Naive thymus-derived CD4-positive, alpha-beta T cell (primary cell): ENCODE measurements at regions of chr10 and their contacts with region 1.

Region 1: GRCh38 chr10:70146489-70147258 is at the start of gene TYSND1:
- DNase-seq: peak; percentile 79 to 95 (median 92)
- ATAC-seq: peak; percentile 92
- H3K4me3 ChIP-seq: peak within 1 kb of the TSS; percentile 79
- H3K4me3 Mint-ChIP-seq: peak within 1 kb of the TSS; percentile 89 to 96 (median 93)
- H3K27ac ChIP-seq: peak within 1 kb of the TSS; percentile 80
- H3K27ac Mint-ChIP-seq: peak within 1 kb of the TSS; percentile 87 to 98 (median 95)
- H3K4me1 ChIP-seq: peaks cover 13 to 22% of the 10 kb centered on the region in 2 donors
- H3K4me1 Mint-ChIP-seq: peaks cover 15 to 45% (median 36%) of the 10 kb centered on the region in 7 donors
- H3K27me3 ChIP-seq: no peaks in the 10 kb centered on the region
- H3K27me3 Mint-ChIP-seq: no peaks in the 10 kb centered on the region
- total RNA-seq, gene TYSND1: 13.8 to 35.9 (median 19.5) TPM

Region 2: DNA sequence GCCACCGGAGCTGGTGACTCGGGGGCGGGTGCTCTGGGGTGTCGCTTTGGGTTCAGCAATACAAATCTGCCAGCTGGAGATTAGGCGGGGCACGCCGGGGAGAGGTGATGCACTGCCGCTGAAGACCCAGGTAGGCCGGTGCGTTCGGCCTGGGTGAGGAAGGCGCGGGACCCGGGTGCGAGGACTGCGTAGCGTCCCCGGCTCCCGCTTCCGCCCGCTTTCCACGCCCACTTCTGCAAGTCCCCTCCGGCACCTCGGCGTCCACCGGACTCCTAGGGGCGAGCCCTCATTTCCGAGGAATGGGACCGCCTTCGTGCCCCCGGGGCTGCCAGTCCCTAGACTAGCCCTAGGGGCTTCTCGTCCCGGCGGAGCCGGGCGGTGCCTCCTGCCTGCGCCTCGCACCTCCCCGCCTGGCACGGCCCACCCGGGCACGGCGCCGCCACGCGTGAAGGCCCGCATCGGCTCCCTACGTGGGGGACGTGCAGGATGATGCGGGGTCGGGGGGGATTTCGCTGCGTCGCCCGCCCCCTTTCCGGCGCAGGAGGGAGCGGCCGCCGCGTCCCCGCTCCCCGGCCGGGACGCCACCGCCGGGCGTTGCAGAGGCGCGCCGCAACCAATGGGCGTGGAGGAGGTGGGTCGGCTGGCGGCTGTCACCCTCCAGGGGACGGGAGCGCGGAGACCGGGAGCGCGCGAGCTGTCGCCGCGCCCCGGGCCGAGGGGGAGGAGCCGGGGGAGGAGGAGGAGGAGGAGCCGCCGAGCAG is 828.4 kb before region 1 on chr10:
- CTCF ChIA-PET with region 1: no interaction called
- POLR2A ChIA-PET with region 1: no interaction called
- intact Hi-C with region 1: loop called (anchors 5 kb)
- DNase-seq: peak; percentile 88 to 96 (median 91)
- ATAC-seq: peak; percentile 97
- H3K4me3 ChIP-seq: peak overlapping the region; percentile 85
- H3K4me3 Mint-ChIP-seq: peak overlapping the region; percentile 86 to 99 (median 96)
- H3K27ac ChIP-seq: peak overlapping the region; percentile 90
- H3K27ac Mint-ChIP-seq: peak overlapping the region; percentile 51 to 97 (median 86)
- H3K4me1 ChIP-seq: peaks cover 22 to 26% of the 10 kb centered on the region in 2 donors
- H3K4me1 Mint-ChIP-seq: peaks cover 7 to 49% (median 36%) of the 10 kb centered on the region in 7 donors
- H3K27me3 ChIP-seq: no peaks in the 10 kb centered on the region
- H3K27me3 Mint-ChIP-seq: no peaks in the 10 kb centered on the region

Region 3: DNA sequence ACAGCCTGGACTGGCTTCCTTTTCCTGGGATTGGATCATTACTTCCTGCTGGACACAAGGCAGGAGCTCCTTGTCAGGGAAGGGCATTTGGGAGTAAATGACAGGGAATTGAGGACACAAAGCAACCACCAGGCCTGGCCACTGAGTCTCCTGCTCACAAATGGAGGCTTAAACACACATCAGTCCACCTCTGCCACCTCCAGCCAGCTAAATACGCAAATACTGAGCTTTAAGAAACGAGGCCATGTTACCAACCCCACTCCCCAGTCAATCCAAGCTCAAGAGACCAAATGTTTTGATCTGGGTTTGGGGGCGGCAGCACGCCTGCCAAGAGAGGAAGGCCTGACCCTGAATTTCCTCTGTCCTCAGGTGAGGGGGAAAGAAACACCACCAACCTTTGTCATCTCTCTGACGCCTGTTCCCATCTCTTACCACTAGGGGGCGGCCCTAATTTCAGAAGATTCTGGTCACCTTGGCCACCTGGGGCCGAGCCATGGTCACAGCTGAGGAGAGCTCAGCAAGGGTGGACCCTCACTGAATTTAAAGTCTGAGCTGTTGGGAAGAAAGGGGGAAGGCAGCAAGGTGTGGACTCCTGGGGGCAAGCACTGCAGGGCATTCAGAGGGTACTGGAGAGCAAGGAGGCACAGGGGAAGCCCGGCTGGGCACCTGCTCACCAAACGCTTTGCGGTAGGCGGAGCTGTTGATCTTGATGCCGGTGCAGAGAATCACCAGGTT is 30.6 kb before region 1 on chr10:
- CTCF ChIA-PET with region 1: interaction called, 49 read pairs
- POLR2A ChIA-PET with region 1: interaction called, 18 read pairs
- intact Hi-C with region 1: loop called (anchors 1 kb)
- DNase-seq: peak; percentile 23 to 66 (median 54)
- ATAC-seq: peak; percentile 82
- H3K4me3 ChIP-seq: no peak overlapping the region
- H3K4me3 Mint-ChIP-seq: no peak overlapping the region
- H3K27ac ChIP-seq: no peak overlapping the region
- H3K27ac Mint-ChIP-seq: no peak overlapping the region
- H3K4me1 ChIP-seq: peaks cover 0 to 6% of the 10 kb centered on the region in 2 donors
- H3K4me1 Mint-ChIP-seq: peaks cover 4 to 10% (median 5%) of the 10 kb centered on the region in 7 donors
- H3K27me3 ChIP-seq: no peaks in the 10 kb centered on the region
- H3K27me3 Mint-ChIP-seq: no peaks in the 10 kb centered on the region

Region 4: DNA sequence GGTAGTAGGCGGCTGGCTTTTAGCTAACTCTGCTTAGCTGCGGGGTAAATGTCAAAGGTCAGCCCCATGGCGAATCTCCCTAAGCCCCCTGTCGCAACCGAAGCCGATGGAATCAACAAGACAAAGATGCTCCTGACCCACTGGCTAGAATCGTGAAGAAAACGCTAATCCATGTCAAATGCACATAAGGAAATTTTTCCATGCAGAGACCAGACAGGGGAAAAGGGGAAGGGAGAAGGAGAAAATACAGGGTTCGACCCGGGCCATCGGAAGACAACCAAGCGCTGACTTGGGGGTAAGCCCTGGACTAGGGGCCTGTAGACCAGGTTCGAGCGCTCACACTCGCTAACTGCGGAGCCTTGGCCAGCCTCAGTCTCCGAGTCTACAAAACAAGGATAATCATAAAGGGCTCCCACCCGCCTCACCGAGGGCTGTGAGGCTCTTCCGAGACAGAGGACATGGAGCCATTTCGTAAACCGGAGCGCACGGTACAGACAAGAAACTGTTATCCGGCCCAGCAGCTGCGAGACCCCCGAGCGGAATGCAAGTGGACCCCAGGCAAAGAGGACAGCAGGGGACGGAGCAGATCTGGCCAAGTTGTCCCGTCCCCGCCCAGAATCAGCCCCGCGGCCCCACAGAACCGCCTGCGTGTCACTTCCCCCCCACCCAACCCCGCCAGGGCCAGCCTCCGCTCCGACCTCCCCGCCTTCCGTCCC is 23.1 kb after region 1 on chr10:
- CTCF ChIA-PET with region 1: interaction called, 21 read pairs
- POLR2A ChIA-PET with region 1: interaction called, 139 read pairs
- intact Hi-C with region 1: loop called (anchors 1 kb)
- DNase-seq: peak in 2 of 9 donors; percentile 8 to 30
- ATAC-seq: peak; percentile 18
- H3K4me3 ChIP-seq: peak overlapping the region; percentile 88
- H3K4me3 Mint-ChIP-seq: peak overlapping the region; percentile 86 to 97 (median 94)
- H3K27ac ChIP-seq: peak overlapping the region; percentile 95
- H3K27ac Mint-ChIP-seq: peak overlapping the region; percentile 83 to 98 (median 96)
- H3K4me1 ChIP-seq: peaks cover 47 to 49% of the 10 kb centered on the region in 2 donors
- H3K4me1 Mint-ChIP-seq: peaks cover 46 to 70% (median 65%) of the 10 kb centered on the region in 7 donors
- H3K27me3 ChIP-seq: no peaks in the 10 kb centered on the region
- H3K27me3 Mint-ChIP-seq: no peaks in the 10 kb centered on the region

Region 5: DNA sequence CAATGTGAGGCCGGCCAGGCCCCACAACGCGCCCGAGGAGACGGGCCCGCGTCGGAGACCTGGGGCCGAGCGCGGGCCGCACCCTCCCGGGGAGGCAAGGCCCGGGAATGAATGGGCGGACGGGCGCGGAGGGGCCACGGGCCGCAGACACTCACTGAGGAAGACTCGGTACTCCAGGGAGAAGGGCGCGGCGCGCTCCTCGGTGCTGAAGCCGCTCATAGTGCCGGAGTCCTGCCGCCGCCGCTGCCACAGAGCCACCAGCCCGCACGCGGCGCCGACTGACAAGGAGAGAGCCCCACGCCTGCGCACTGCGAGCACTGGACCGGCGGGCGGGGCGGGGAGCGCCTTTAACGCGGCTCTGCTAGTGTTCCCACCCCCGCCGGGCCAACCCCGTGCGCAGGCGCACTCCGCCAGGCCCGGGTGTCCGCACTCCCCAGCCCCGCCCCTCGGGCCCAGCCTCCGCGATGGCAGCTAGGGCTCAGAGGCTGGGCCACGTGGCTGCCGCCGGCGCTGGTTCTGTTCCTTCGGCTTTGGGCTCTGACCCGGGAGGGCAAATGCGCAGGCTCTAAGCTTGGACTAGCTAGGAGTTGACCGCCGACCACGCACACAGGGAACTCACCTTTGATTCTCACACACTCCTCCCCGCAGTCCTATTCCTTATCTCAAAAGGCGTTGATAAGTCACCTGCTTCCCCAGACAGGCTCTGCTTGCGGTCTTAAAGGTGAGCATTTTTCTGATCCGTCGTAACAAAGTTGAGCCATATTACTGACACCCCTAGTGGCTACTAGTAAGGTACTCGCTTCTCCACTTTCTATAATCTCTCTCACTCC is 86.7 kb after region 1 on chr10 and contains the start of gene PPA1:
- CTCF ChIA-PET with region 1: no interaction called
- POLR2A ChIA-PET with region 1: interaction called, 4 read pairs
- intact Hi-C with region 1: loop called (anchors 1 kb)
- DNase-seq: peak; percentile 98 to 100 (median 99)
- ATAC-seq: peak; percentile 99
- H3K4me3 ChIP-seq: peak within 1 kb of the TSS; percentile 88
- H3K4me3 Mint-ChIP-seq: peak within 1 kb of the TSS; percentile 74 to 94 (median 87)
- H3K27ac ChIP-seq: peak within 1 kb of the TSS; percentile 84
- H3K27ac Mint-ChIP-seq: peak within 1 kb of the TSS; percentile 79 to 99 (median 92)
- H3K4me1 ChIP-seq: peaks cover 4 to 5% of the 10 kb centered on the region in 2 donors
- H3K4me1 Mint-ChIP-seq: peaks cover 9 to 47% (median 35%) of the 10 kb centered on the region in 7 donors
- H3K27me3 ChIP-seq: no peaks in the 10 kb centered on the region
- H3K27me3 Mint-ChIP-seq: no peaks in the 10 kb centered on the region
- total RNA-seq, gene PPA1: 51.9 to 175 (median 69.6) TPM

Region 6: GRCh38 chr10:70404036-70404786 is 257.5 kb after region 1 on chr10 and contains the start of gene EIF4EBP2:
- CTCF ChIA-PET with region 1: no interaction called
- POLR2A ChIA-PET with region 1: interaction called, 6 read pairs
- intact Hi-C with region 1: loop called (anchors 1 kb)
- DNase-seq: peak; percentile 95 to 100 (median 98)
- ATAC-seq: peak; percentile 98
- H3K4me3 ChIP-seq: peak within 1 kb of the TSS; percentile 82
- H3K4me3 Mint-ChIP-seq: peak within 1 kb of the TSS; percentile 91 to 99 (median 96)
- H3K27ac ChIP-seq: peak within 1 kb of the TSS; percentile 86
- H3K27ac Mint-ChIP-seq: peak within 1 kb of the TSS; percentile 88 to 97 (median 94)
- H3K4me1 ChIP-seq: peaks cover 13 to 24% of the 10 kb centered on the region in 2 donors
- H3K4me1 Mint-ChIP-seq: peaks cover 30 to 53% (median 44%) of the 10 kb centered on the region in 7 donors
- H3K27me3 ChIP-seq: no peaks in the 10 kb centered on the region
- H3K27me3 Mint-ChIP-seq: peaks cover 0 to 3% (median 0%) of the 10 kb centered on the region in 5 donors
- total RNA-seq, gene EIF4EBP2: 33.5 to 52.1 (median 45.2) TPM